Right ventricle myocardium superior (tissue), 1 donor: ENCODE measurements at regions of chr2 and their contacts with region 1.

Region 1: DNA sequence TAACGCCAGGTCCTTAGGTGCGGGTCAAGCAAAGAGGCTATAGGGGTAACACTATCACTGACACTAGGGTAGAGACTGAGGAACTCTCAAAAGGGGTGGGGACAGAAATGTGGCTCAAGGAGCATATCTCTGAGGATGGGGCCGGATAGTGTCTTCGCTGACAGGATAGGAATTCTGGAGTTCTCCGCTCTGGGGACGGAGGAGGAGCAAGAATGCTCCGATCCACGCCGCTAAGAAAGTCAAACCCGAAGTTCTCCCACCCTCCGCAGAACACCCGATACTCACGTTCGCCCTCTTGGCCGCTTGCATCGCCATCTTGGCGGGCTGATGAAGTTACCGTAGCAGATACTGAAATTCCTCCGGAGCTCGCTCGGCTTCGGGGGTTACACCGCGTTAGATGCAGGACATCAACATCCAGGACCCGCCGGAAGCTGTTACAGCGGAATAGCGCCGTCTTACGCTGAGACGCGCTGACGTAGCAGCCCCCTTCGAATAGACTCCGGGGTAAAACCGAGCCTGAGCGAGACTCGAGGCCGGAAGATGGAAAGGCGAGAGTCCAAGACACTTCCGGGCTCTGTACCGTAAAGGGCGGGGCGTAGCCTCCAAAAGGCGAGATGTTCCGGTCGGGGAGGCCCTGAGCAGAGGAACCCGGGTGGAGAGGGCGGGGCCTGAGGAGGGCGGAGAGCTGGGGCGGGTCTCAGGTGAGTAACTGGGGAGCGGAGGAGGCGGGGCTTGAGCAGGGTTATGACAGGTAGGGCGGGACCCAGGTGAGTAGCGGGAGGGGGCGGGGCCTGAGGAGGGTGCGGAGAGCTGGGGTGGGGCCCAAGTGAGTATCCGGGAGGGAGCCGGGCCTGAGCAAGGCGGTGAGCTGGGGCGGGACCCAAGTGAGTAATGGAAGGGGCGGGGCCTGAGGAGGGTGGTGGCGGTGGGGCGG is at the start of gene SF3B6:
- DNase-seq: peak; percentile 98
- ATAC-seq: peak; percentile 95
- total RNA-seq, gene SF3B6: 47.7 TPM

Region 2: GRCh38 chr2:23926750-23927571 is 149.2 kb before region 1 on chr2 and contains the start of gene ATAD2B:
- intact Hi-C with region 1: loop called (anchors 5 kb)
- DNase-seq: peak; percentile 95
- ATAC-seq: peak; percentile 98
- total RNA-seq, gene ATAD2B: 6.1 TPM

Region 3: GRCh38 chr2:24721470-24721869 is 645.3 kb after region 1 on chr2:
- intact Hi-C with region 1: no loop called
- DNase-seq: peak; percentile 82
- ATAC-seq: peak; percentile 94